ENCODE measurements at regions of chr10 and their contacts with region 1.

Region 1: DNA sequence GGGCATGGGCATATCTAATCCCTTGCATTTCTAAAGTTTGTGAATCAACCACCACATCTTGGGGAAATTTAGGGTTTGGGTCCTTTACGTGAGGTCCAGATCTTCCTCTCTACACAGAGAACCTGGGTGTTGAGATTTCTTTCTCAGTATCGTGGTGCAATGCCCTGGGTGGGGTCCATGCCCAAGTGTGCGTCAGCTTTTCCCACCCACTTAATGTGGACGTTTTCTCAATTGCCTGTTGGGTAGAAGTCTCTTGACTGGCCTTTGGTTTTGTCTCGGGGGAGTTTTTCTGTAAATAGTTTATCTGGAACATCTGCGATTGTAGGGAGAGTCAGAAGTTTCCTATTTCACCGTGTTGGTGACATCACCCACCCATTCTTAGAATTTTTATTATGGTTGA is 361.2 kb downstream of the HTR7 start:
- DNase-seq: no peak
- ATAC-seq: no peak
- H3K4me3 ChIP-seq: no peak overlapping the region
- H3K27ac ChIP-seq: no peak overlapping the region
- H3K4me1 ChIP-seq: no peaks in the 10 kb centered on the region
- H3K27me3 ChIP-seq: peaks cover 1% of the 10 kb centered on the region; the same call in 1 of the 2 replicates
- CTCF ChIP-seq: no peak
- POLR2A ChIP-seq: no peak
- RAD21 ChIP-seq: no peak

Region 2: GRCh38 chr10:90526721-90527120 is 30.1 kb after region 1 on chr10:
- CTCF ChIA-PET with region 1: no interaction called
- POLR2A ChIA-PET with region 1: interaction called, 12 read pairs
- dilution Hi-C with region 1: no loop called
- in situ Hi-C with region 1: no loop called
- intact Hi-C with region 1: no loop called
- DNase-seq: no peak
- ATAC-seq: no peak
- H3K4me3 ChIP-seq: no peak overlapping the region
- H3K27ac ChIP-seq: no peak overlapping the region
- H3K4me1 ChIP-seq: no peaks in the 10 kb centered on the region
- H3K27me3 ChIP-seq: no peaks in the 10 kb centered on the region; the same call in 1 of the 2 replicates
- CTCF ChIP-seq: no peak
- POLR2A ChIP-seq: no peak
- RAD21 ChIP-seq: no peak